PC-9 (cell line): ENCODE measurements at regions of chr5 and their contacts with region 1.

Region 1: GRCh38 chr5:127892467-127893207 is 189.4 kb downstream of the CCDC192 start:
- DNase-seq: peak; percentile 35 to 80
- H3K4me3 ChIP-seq: no peak overlapping the region
- H3K27ac ChIP-seq: peak overlapping the region; percentile 75
- H3K4me1 ChIP-seq: peaks cover 23% of the 10 kb centered on the region
- H3K27me3 ChIP-seq: no peaks in the 10 kb centered on the region
- CTCF ChIP-seq: no peak

Region 2: DNA sequence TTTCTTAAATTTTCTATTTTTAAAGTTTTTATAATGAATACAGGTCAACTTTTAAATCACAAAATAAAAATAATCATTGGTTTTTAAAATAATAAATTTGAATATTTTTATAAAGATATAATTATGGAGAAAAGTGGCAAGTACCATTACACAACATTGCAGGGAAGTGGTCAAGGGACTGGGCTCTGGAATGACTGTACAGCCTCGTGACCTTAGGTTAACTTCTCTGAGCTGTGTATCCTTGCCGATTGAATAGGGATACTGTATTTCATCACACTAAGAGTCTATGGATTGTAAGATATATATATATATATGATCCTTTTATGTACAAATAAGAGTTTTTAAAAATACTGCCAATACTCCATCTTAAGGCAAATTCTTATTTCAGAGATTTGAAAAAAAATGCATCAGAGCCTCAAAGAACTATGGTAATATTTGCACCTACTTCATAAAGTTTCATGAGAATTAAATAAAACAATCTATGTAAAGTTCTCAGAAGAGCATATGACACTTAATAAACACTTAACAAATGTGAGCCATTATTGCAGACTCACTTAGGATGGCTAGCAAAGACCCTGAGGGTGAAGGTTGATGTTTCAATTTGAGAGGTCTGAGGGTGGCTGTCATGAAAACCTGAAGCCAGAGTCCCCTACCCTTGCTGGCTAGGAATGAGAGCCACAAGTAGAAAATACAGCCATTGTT is 53.0 kb before region 1 on chr5:
- CTCF ChIA-PET with region 1: no interaction called
- POLR2A ChIA-PET with region 1: no interaction called
- intact Hi-C with region 1: loop called (anchors 2 kb)
- DNase-seq: no peak
- H3K4me3 ChIP-seq: no peak overlapping the region
- H3K27ac ChIP-seq: no peak overlapping the region
- H3K4me1 ChIP-seq: peaks cover 5% of the 10 kb centered on the region; the same call in 1 of the 2 replicates
- H3K27me3 ChIP-seq: no peaks in the 10 kb centered on the region
- CTCF ChIP-seq: no peak